ENCODE measurements at regions of chr3 and their contacts with region 1.

Region 1: GRCh38 chr3:138378990-138379389 is 30.6 kb downstream of the MRAS start:
- DNase-seq: no peak
- ATAC-seq: no peak
- H3K4me3 ChIP-seq: no peak overlapping the region
- H3K27ac ChIP-seq: no peak overlapping the region
- H3K4me1 ChIP-seq: no peaks in the 10 kb centered on the region
- H3K27me3 ChIP-seq: no peaks in the 10 kb centered on the region
- CTCF ChIP-seq: no peak

Region 2: DNA sequence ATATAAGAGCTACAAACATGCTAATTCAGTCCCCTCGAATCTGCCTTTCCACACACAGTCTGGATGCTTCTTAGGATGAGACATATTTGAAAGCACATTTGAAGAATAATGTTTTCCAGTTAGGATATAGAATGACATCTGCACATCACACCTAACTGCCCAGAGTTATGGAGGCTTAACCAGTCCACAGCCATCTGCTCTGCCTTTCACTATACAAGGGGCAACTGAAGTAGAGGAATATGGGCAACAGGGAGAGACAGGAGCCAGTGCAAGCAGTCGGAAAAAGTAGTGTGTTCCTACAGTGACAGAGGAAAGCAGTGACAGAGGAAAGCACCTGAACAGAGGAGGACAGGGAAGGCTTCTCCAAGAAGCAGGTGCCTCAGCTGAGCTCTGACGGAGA is 448.0 kb before region 1 on chr3:
- CTCF ChIA-PET with region 1: no interaction called
- POLR2A ChIA-PET with region 1: interaction called, 15 read pairs
- in situ Hi-C with region 1: no loop called
- intact Hi-C with region 1: no loop called
- DNase-seq: no peak
- ATAC-seq: no peak
- H3K4me3 ChIP-seq: no peak overlapping the region
- H3K27ac ChIP-seq: no peak overlapping the region
- H3K4me1 ChIP-seq: no peaks in the 10 kb centered on the region
- H3K27me3 ChIP-seq: peaks cover 15% of the 10 kb centered on the region
- CTCF ChIP-seq: no peak

Region 3: DNA sequence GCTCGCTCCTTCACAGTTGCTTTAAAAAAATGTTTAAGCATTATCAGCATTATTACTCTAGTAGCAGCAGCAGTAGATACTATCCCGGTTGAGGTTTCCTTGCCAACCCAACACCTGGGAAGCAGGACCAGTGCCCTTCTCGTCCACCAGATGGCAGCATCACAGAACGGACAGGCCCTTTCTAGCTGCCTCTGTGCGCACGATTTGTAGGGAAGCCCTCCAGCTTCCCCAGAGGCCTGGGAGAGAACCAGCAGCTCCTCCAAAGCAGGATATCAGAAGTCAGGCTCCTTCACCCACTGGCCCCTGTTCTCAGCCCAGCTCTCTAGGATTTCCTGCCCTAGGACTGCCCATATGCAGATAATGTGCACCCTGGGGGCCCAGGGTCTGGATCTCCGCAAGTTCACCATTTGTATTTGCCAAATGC is 38.6 kb after region 1 on chr3:
- CTCF ChIA-PET with region 1: no interaction called
- POLR2A ChIA-PET with region 1: no interaction called
- in situ Hi-C with region 1: no loop called
- intact Hi-C with region 1: no loop called
- DNase-seq: peak; percentile 67
- ATAC-seq: peak; percentile 98
- H3K4me3 ChIP-seq: no peak overlapping the region
- H3K27ac ChIP-seq: no peak overlapping the region
- H3K4me1 ChIP-seq: no peaks in the 10 kb centered on the region
- H3K27me3 ChIP-seq: peaks cover 5% of the 10 kb centered on the region; the same call in 1 of the 2 replicates
- CTCF ChIP-seq: peak; percentile 97

Region 4: GRCh38 chr3:138567401-138567800 is 188.4 kb after region 1 on chr3:
- CTCF ChIA-PET with region 1: no interaction called
- POLR2A ChIA-PET with region 1: no interaction called
- in situ Hi-C with region 1: no loop called
- intact Hi-C with region 1: no loop called
- DNase-seq: no peak
- ATAC-seq: no peak
- H3K4me3 ChIP-seq: no peak overlapping the region
- H3K27ac ChIP-seq: no peak overlapping the region
- H3K4me1 ChIP-seq: no peaks in the 10 kb centered on the region
- H3K27me3 ChIP-seq: no peaks in the 10 kb centered on the region
- CTCF ChIP-seq: 0 out of 2 replicates have a peak, but pooled peaks have one; percentile 11

Measured in Panc1 (cell line).